ENCODE measurements at regions of chr2 and their contacts with region 1.

Region 1: GRCh38 chr2:43226558-43226954 is at the start of gene ZFP36L2:
- DNase-seq: peak; percentile 96 to 97
- H3K4me3 ChIP-seq: peak within 1 kb of the TSS; percentile 90 to 94
- H3K27ac ChIP-seq: peak within 1 kb of the TSS; percentile 98 to 99
- H3K4me1 ChIP-seq: peaks cover 0 to 7% of the 10 kb centered on the region in 2 donors
- H3K27me3 ChIP-seq: no peaks in the 10 kb centered on the region
- CTCF ChIP-seq: peak in 2 of 4 experiments; percentile 17 to 39
- POLR2A ChIP-seq: peak; percentile 97
- total RNA-seq, gene ZFP36L2: 18.2 to 209 (median 67.2) TPM

Region 2: DNA sequence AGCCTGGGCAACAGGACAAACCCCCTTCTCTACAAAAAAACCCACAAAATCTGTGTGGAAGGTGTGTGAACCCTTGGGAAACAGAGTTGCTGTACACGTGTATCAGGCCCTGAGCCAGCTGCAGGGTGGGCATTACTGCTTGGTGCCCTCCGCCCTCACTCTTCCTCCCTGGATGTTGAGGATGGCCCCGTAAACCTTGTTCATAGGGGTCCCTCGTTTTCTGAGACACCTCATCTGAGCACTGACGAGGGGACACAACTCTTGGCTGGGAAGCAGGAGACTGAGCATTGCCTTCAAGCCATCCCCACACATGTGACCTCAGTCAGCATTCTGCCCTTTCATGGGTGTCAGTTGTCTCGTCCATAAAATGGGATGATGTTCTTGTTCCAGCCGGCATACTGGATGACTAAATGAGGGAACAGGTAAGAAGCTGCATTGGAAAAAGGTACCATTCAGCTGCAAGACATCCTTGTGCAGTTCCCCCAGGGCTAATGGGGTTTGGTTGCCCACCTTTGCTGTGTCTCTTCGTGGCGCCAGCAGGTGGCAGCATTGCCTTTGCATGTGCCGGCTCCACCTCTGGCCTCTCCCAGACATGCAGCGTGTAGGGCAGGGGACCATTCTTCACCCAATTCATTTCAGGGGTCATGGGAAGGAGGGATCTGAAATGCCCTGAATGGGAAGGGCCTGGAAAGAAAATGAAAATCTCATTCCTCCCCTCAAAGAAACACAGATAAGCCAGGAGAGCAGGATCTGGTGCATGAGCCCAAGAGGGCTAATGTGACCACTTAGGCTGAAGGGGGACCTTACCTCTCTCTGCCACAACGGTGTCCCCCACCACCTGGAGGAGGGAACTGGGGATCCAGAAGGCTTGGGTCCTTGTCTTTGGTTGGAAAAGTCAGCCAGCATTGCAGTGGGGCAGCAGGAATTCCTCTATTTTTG is 397.8 kb before region 1 on chr2:
- intact Hi-C with region 1: loop called (anchors 5 kb)
- DNase-seq: peak; percentile 84 to 86
- H3K4me3 ChIP-seq: no peak overlapping the region
- H3K27ac ChIP-seq: peak overlapping the region; percentile 74 to 79
- H3K4me1 ChIP-seq: no peaks in the 10 kb centered on the region
- H3K27me3 ChIP-seq: no peaks in the 10 kb centered on the region
- CTCF ChIP-seq: peak; percentile 89 to 96 (median 92)
- POLR2A ChIP-seq: no peak

Region 3: DNA sequence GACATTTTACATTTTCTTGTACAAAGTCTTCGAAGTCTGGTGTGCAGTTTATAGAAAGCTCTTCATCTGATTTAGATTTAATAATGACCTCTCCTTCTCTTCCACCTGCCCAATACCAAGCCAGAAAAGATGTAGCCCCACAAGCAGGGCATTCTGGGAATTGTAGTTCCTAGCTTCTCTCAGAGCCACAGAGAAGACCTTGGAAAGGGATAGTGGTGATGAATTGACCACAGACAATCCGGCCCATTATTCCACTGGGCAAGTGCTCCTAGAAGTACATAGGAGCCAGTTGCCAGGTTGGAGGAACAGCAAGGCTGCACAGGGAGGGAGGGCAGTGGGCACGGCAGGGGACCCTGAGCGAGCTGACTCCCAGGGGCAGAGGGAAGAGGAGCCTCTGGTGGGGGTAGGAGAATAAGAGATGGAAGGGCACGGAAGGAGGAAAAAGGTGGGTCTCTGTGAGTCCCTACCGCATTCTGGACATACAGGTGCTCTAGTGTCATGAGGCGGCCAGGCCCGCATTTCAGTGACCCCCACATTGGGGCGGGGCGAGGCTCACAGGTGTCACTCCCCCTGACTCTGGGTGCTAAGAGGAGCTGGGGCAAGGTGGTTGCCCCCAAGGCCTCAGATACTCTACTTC is 281.7 kb before region 1 on chr2:
- intact Hi-C with region 1: loop called (anchors 5 kb)
- DNase-seq: peak in 1 of 2 donors; percentile 14
- H3K4me3 ChIP-seq: no peak overlapping the region
- H3K27ac ChIP-seq: peak overlapping the region in 1 of 2 donors; percentile 6
- H3K4me1 ChIP-seq: no peaks in the 10 kb centered on the region
- H3K27me3 ChIP-seq: no peaks in the 10 kb centered on the region
- CTCF ChIP-seq: no peak
- POLR2A ChIP-seq: no peak

Region 4: GRCh38 chr2:43484323-43484930 is 257.9 kb after region 1 on chr2:
- intact Hi-C with region 1: loop called (anchors 10 kb)
- DNase-seq: no peak
- H3K4me3 ChIP-seq: no peak overlapping the region
- H3K27ac ChIP-seq: peak overlapping the region; percentile 68 to 81
- H3K4me1 ChIP-seq: peaks cover 0 to 7% of the 10 kb centered on the region in 2 donors
- H3K27me3 ChIP-seq: no peaks in the 10 kb centered on the region
- CTCF ChIP-seq: peak; percentile 63 to 87 (median 74)
- POLR2A ChIP-seq: no peak